ENCODE measurements at regions of chr17 and their contacts with region 1.

Region 1: DNA sequence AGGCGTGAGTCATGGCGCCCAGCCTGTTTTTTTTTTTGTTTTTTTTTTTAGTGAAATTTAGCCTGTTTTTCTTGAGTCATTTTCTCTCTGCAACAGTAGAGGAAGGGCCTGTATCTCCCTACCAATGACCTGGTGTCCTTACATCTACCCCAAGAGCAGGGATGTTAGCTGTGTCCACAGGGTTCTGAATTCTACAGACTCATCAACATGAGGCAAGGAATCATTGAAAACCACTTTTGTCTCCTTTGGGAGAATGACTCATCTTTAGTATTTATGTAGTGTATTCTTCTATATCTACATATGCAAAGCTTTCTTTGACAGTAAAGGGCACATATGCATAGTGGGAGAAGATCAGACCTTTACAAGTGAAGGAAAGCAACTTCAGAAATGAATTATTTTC is 105.3 kb downstream of the SPECC1 start:
- DNase-seq: no peak
- ATAC-seq: no peak

Region 2: GRCh38 chr17:20009302-20010098 is 105.0 kb before region 1 on chr17 and contains the start of gene SPECC1:
- intact Hi-C with region 1: loop called (anchors 5 kb)
- DNase-seq: peak; percentile 48
- ATAC-seq: peak; percentile 99
- total RNA-seq, gene SPECC1: 8.5 TPM